Activated CD4-positive, alpha-beta T cell treated with anti-CD3 and anti-CD28 coated beads for 36 hours (primary cell): ENCODE measurements at regions of chr5 and their contacts with region 1.

Region 1: DNA sequence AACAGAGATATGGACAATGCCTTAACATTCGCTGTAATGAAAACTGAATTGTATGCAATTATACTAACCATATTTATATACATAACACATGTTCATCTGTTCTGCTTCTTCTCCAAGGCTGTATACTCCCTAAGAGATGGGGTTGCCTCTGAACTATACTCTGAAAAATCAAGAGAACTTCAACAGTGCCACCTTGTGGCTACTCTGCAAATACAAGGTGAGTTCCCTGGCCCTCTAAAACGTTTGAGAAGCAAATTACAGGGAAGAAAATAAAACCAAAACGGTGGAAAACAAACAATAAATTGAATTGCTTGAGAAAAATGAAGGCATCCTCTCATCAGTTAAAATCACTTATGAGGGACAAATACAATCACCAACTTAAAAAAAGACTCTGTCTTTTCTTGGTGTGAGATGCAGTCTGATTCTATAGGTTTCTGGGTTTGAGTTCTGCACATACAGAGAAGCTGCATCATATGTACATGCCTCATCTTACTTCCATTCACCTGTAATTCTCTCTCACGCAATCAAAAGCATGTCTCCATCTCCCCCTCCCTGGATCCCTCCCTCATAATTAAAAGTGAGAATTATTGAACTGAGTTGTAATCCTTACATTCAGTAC is 98.6 kb downstream of the FBXW11 start:
- DNase-seq: peak; percentile 68
- ATAC-seq: peak; percentile 81
- H3K4me3 Mint-ChIP-seq: no peak overlapping the region
- H3K27ac Mint-ChIP-seq: peak overlapping the region; percentile 64
- H3K4me1 Mint-ChIP-seq: peaks cover 57% of the 10 kb centered on the region
- H3K27me3 Mint-ChIP-seq: no peaks in the 10 kb centered on the region

Region 2: GRCh38 chr5:171484460-171484899 is 423.4 kb before region 1 on chr5:
- CTCF ChIA-PET with region 1: interaction called, 3 read pairs
- POLR2A ChIA-PET with region 1: no interaction called
- intact Hi-C with region 1: loop called (anchors 1 to 2 kb)
- DNase-seq: peak; percentile 74
- ATAC-seq: peak; percentile 42
- H3K4me3 Mint-ChIP-seq: no peak overlapping the region
- H3K27ac Mint-ChIP-seq: no peak overlapping the region
- H3K4me1 Mint-ChIP-seq: peaks cover 6% of the 10 kb centered on the region
- H3K27me3 Mint-ChIP-seq: peaks cover 12% of the 10 kb centered on the region

Region 3: DNA sequence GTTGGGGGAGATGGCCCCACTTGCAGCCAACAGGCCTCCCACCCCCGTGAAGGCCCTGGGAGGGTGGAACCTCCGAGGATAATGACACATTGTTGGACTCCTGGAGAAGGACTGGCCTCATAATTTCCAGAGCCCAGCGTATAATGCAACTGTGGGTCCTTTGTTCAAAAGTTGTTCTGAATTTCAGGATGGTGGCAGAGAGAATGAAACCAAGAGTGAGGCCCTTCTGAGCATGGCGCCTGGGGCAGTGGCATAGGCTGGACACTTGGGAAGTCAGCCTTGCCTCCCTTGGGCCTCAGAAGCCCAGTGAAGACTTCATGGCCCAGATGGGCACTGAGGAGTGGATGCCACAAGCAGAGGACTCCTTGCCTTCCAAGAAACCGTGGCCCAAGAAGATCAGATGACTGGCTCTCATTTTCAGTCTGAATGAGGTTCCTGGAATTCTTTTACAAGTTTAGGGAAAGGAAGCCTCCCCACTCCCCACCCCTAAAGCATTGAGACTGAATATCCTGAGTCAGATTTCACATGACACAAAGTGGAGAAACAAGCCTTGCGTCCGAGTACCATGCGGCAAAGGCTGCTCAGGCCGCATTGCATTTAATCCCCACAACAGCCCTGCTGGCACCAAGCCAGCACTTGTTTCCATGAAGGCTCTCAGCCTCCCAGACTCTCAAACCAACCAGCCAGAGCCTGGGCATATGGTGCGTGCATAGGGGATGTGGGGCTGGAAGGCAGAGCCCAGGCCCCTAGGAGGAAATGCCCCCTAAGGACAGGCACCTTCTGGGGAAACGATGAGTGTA is 218.9 kb before region 1 on chr5:
- CTCF ChIA-PET with region 1: no interaction called
- POLR2A ChIA-PET with region 1: no interaction called
- intact Hi-C with region 1: no loop called
- DNase-seq: no peak
- ATAC-seq: no peak
- H3K4me3 Mint-ChIP-seq: no peak overlapping the region
- H3K27ac Mint-ChIP-seq: no peak overlapping the region
- H3K4me1 Mint-ChIP-seq: no peaks in the 10 kb centered on the region
- H3K27me3 Mint-ChIP-seq: peaks cover 2% of the 10 kb centered on the region

Region 4: DNA sequence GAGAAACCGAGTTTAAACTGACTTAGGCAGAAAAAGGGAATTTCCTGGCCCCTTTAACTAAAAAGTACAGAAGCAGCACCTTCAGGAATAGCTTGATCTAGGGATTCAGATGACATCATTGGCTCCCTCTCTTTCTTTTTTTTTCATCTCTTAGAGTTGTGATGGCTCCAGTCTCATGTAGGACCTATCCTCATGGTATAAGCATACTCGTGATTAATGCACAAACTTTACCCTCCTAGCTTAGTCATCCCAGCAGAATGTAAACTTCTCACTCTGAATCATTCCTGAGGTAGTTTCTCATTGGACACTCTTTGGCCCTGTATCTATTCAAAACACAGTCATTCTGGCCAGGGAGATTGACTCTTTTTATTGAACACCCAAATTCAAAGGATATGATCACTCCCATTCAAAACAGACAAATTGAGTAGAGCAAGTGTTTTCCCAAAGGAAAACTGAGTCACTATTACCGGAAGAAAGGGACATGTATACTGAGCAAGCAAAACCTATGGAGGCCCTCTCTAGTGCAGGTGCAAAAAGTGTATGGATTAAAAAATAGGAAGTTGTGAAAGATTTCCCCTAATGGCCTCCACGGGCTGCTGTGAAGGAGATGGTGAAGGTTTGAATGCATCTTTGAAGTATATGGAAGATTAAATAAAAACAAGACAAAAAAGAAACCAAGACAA is 149.8 kb before region 1 on chr5:
- CTCF ChIA-PET with region 1: no interaction called
- POLR2A ChIA-PET with region 1: no interaction called
- intact Hi-C with region 1: loop called (anchors 2 kb)
- DNase-seq: no peak
- ATAC-seq: peak; percentile 98
- H3K4me3 Mint-ChIP-seq: no peak overlapping the region
- H3K27ac Mint-ChIP-seq: no peak overlapping the region
- H3K4me1 Mint-ChIP-seq: peaks cover 17% of the 10 kb centered on the region
- H3K27me3 Mint-ChIP-seq: no peaks in the 10 kb centered on the region

Region 5: DNA sequence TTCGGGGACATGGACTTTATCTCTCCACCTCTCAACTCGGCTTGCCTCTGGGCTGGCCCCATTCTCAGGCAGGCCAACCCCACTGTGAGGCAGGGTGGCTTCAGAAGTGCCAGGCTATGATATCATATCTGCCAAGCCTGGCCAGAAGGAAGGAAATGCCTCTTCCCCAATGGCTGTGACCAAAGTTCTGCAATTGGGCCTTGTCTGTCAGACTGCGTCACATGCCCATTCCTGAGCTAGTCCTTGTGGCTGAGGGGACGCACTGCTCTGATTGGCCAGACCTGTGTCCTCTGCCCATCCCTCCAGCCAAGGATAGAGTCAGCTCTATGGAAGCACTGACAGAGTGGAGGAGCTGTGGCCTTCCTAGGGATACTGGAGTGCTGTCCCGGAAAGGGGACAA is 110.3 kb before region 1 on chr5:
- CTCF ChIA-PET with region 1: no interaction called
- POLR2A ChIA-PET with region 1: no interaction called
- intact Hi-C with region 1: no loop called
- DNase-seq: no peak
- ATAC-seq: no peak
- H3K4me3 Mint-ChIP-seq: no peak overlapping the region
- H3K27ac Mint-ChIP-seq: no peak overlapping the region
- H3K4me1 Mint-ChIP-seq: no peaks in the 10 kb centered on the region
- H3K27me3 Mint-ChIP-seq: peaks cover 2% of the 10 kb centered on the region

Region 6: GRCh38 chr5:172006321-172007174 is 98.7 kb after region 1 on chr5 and contains the start of gene FBXW11:
- CTCF ChIA-PET with region 1: interaction called, 57 read pairs
- POLR2A ChIA-PET with region 1: interaction called, 3 read pairs
- intact Hi-C with region 1: loop called (anchors 1 to 2 kb)
- DNase-seq: peak; percentile 97
- ATAC-seq: peak; percentile 85
- H3K4me3 Mint-ChIP-seq: peak within 1 kb of the TSS; percentile 92
- H3K27ac Mint-ChIP-seq: peak within 1 kb of the TSS; percentile 98
- H3K4me1 Mint-ChIP-seq: peaks cover 43% of the 10 kb centered on the region
- H3K27me3 Mint-ChIP-seq: no peaks in the 10 kb centered on the region
- total RNA-seq, gene FBXW11: 33.8 to 39.5 TPM

Region 7: DNA sequence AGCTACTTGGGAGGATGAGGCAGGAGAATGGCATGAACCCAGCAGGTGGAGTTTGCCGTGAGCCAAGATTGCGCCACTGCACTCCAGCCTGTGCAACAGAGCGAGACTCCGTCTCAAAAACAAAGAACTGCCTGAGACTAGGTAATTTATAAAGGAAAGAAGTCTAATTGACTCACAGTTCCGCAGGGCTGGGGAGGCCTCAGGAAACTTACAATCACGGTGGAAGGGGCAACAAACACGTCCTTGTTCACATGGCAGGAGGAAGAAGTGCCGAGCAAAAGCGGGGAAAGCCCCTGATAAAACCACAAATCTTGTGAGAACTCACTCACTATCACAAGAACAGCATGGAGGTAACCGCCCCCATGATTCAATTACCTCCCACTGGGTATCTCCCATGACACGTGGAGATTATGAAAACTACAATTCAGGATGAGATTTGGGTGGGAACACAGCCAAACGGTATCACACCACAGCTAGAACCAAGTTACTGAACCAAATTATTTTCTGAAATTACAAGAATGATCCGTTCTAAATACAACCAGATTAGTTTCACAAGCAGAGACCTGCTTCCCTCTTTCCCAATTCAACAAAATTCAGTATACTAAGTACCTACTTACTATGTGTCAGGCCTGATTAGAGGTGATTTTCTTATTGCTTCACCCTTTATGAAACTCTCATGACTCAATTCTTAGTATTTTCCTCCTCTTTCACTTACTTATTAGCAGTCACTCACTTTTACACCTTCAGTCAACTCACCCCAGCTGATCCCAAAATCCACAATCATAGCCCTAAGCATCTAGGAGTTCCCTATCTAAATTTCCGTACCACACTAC is 367.3 kb after region 1 on chr5:
- CTCF ChIA-PET with region 1: no interaction called
- POLR2A ChIA-PET with region 1: no interaction called
- intact Hi-C with region 1: loop called in 1 of 2 experiments (anchors 2 kb)
- DNase-seq: peak; percentile 77
- ATAC-seq: peak; percentile 92
- H3K4me3 Mint-ChIP-seq: no peak overlapping the region
- H3K27ac Mint-ChIP-seq: peak overlapping the region; percentile 40
- H3K4me1 Mint-ChIP-seq: peaks cover 43% of the 10 kb centered on the region
- H3K27me3 Mint-ChIP-seq: no peaks in the 10 kb centered on the region

Region 8: DNA sequence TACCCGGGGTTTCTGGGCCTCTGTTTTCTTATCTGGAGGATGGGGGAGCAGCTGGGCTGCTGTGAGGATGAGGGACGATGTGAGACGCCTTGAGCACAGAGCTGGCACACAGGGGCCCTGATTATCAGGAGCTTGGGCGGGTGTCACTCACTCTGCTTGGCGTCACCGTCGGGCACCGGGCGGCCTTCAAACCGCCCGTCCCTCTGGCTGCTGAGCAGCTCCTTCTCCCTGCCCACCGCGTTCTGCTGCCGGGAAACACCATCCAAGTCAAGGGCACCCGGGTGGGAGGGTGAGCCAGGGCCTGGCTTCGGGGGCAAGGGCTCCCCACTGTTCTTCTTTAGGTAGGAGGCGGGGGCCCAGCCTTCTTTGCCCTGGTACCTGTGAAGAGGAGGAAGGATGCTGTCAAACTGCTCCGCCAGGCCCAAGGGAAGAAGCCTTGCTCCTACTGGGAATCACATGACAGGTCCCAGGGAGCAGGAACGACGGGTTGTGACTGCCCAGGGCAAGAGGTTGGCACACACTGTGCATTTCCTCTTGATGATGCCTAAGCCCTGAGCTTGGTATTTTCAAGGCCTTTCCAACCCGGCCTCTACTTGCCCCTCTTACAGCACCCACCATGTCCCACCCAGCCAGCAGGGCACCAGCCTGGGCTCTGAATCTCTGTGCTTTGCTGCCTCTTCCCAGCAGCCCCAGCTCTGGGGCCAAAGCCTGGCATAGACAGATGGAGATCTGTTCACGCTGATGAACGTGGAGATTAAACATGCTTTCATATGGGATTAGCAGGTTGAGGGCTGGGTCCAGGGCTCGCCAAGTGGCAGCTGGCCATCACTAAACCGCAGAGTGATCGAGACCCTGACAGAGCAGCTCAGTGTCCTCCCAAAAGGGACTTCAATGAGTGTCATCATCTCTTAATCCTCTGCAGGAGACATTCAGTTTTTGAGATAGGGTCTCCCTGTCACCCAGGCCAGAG is 442.7 kb after region 1 on chr5:
- CTCF ChIA-PET with region 1: no interaction called
- POLR2A ChIA-PET with region 1: no interaction called
- intact Hi-C with region 1: no loop called
- DNase-seq: no peak
- ATAC-seq: no peak
- H3K4me3 Mint-ChIP-seq: no peak overlapping the region
- H3K27ac Mint-ChIP-seq: no peak overlapping the region
- H3K4me1 Mint-ChIP-seq: no peaks in the 10 kb centered on the region
- H3K27me3 Mint-ChIP-seq: no peaks in the 10 kb centered on the region